ENCODE measurements at regions of chr1 and their contacts with region 1.

Region 1: DNA sequence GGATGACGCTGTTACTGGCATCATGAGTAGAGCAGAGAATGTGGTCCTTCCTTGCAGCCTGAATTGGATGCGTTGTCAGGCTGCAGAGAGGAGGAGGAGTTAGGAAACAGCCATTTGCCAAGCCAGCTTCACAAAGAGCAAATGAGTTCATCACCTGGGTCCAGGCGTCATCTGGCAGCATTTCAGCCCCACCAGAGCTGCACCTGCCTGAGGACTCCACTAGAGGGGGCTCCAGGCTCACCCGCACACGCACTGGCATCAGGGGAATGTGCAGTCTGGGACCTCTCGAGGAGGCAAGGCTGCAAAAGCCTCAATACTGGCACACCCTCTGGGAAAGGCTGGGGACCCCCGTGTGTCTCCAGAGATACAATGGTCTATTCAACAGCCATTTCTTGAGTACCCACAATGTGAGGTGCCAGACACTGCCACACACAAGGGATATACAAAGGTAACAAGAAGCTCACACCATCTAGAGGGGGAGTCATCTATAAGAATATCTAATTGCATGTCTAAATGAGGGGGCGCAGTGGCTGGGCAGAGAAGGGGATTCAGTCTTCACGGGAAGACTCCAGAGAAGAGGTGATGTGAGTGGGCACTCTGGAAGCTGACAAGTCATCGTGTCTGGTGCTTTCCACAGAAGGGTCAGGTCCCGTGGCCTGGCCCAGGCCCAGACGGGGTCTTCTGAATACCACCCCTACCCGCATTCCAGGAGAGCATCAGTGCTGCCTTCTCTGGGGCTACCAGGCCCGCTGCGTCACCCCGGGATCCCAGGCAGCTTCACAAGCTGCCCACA is 53.5 kb upstream of the CNTN2 start:
- DNase-seq: no peak
- H3K4me3 ChIP-seq: no peak overlapping the region
- H3K27ac ChIP-seq: peak overlapping the region; percentile 20 to 60 (median 38)
- H3K4me1 ChIP-seq: peaks cover 0 to 16% (median 10%) of the 10 kb centered on the region in 4 donors
- H3K27me3 ChIP-seq: no peaks in the 10 kb centered on the region
- CTCF ChIP-seq: peak; percentile 87 to 96 (median 89)
- EP300 ChIP-seq: no peak
- POLR2A ChIP-seq: no peak

Region 2: GRCh38 chr1:205061665-205062069 is 72.2 kb after region 1 on chr1:
- intact Hi-C with region 1: loop called (anchors 2 kb)
- DNase-seq: no peak
- H3K4me3 ChIP-seq: no peak overlapping the region
- H3K27ac ChIP-seq: no peak overlapping the region
- H3K4me1 ChIP-seq: peaks cover 6 to 12% (median 9%) of the 10 kb centered on the region in 4 donors
- H3K27me3 ChIP-seq: peaks cover 0 to 3% (median 0%) of the 10 kb centered on the region in 4 donors
- CTCF ChIP-seq: peak; percentile 82 to 89 (median 84)
- EP300 ChIP-seq: no peak
- POLR2A ChIP-seq: no peak

Region 3: GRCh38 chr1:205255941-205256780 is 266.7 kb after region 1 on chr1:
- intact Hi-C with region 1: loop called (anchors 5 kb)
- DNase-seq: peak; percentile 98
- H3K4me3 ChIP-seq: no peak overlapping the region
- H3K27ac ChIP-seq: no peak overlapping the region
- H3K4me1 ChIP-seq: peaks cover 29 to 48% (median 42%) of the 10 kb centered on the region in 4 donors
- H3K27me3 ChIP-seq: no peaks in the 10 kb centered on the region
- CTCF ChIP-seq: peak in 2 of 3 experiments; percentile 94 to 98
- EP300 ChIP-seq: no peak
- POLR2A ChIP-seq: no peak

Region 4: GRCh38 chr1:205271277-205271676 is 281.8 kb after region 1 on chr1:
- intact Hi-C with region 1: no loop called
- DNase-seq: no peak
- H3K4me3 ChIP-seq: no peak overlapping the region
- H3K27ac ChIP-seq: no peak overlapping the region
- H3K4me1 ChIP-seq: peaks cover 13 to 34% (median 26%) of the 10 kb centered on the region in 4 donors
- H3K27me3 ChIP-seq: no peaks in the 10 kb centered on the region
- CTCF ChIP-seq: no peak
- EP300 ChIP-seq: no peak
- POLR2A ChIP-seq: no peak

Measured in esophagus muscularis mucosa (tissue), 4 donors.